AG04450 (cell line): ENCODE measurements at regions of chr4 and their contacts with region 1.

Region 1: GRCh38 chr4:153142700-153143438 is 61.4 kb upstream of the TRIM2 start:
- DNase-seq: no peak
- H3K4me3 ChIP-seq: no peak overlapping the region
- H3K27ac ChIP-seq: no peak overlapping the region
- H3K27me3 ChIP-seq: peaks cover 2% of the 10 kb centered on the region
- CTCF ChIP-seq: peak; percentile 97

Region 2: DNA sequence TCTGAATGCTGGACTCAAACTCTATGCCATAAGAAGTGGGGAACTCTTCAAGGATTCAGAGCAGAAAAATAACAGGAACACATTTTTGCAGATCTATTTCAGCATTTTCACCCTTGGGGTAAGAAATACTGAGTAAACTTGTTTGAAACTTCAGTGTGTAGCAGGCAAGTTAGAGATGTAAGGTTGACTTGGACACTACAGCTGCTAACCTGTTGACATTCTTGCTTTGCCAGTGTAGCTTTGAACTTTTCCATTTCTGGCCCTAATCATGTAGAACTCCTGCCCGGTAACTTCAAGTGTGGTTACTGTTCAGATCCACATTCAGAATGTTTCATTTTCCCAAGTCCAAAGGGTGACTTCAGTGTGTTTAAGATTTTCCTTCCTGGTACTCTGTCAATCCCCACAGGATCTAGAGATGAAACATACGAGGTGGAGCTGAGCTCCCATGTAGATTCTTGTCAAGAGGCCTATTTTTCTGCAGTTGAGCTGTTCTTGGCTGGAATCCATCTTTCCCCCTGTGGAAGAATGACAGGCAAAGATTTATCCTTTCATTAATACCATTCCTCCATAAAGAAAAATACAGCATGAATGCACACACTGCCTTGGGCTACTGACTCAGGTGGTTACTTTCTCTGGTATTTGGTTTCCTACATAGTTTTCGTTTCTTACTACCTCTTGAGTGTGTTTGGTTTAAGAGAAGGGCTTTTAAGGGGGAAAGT is 172.6 kb before region 1 on chr4:
- CTCF ChIA-PET with region 1: no interaction called
- POLR2A ChIA-PET with region 1: no interaction called
- DNase-seq: no peak
- H3K4me3 ChIP-seq: no peak overlapping the region
- H3K27ac ChIP-seq: no peak overlapping the region
- H3K27me3 ChIP-seq: no peaks in the 10 kb centered on the region
- CTCF ChIP-seq: no peak

Region 3: DNA sequence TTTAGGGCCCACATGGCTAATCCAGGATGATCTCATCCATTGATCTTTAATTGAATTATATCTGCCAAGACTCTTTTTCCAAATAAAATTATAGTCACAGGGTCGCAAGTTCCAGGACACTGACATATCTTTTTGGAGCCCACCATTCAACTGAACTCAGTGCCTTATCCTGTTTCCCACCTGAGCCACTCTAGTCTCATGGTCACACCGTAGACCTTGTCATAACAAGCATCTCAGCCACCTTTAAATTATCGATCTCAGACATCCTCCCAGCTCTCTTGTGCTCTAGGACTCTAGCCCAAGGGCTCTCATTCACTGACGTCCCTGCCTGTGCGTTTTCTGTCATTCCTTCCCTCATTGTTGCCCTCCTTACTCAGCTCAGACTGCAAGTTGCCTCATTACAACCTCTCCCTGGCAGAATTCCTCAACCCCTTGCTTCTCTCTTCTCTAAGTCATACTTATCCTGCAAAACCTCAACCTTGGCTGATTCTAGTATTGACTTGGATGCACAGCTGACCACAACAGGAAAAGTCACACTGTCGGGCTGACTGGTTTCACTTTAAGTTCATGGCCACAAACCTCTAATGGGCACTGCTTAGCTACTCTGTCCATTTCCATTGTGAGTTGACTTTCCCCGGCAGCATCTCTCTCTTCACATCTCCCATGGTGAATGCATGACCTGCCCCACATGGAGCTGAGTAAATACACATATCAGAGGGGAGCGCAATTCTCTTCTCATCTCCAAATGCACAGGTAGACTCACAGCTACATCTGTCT is 29.6 kb before region 1 on chr4:
- CTCF ChIA-PET with region 1: no interaction called
- POLR2A ChIA-PET with region 1: no interaction called
- DNase-seq: no peak
- H3K4me3 ChIP-seq: no peak overlapping the region
- H3K27ac ChIP-seq: no peak overlapping the region
- H3K27me3 ChIP-seq: peaks cover 18% of the 10 kb centered on the region
- CTCF ChIP-seq: no peak

Region 4: DNA sequence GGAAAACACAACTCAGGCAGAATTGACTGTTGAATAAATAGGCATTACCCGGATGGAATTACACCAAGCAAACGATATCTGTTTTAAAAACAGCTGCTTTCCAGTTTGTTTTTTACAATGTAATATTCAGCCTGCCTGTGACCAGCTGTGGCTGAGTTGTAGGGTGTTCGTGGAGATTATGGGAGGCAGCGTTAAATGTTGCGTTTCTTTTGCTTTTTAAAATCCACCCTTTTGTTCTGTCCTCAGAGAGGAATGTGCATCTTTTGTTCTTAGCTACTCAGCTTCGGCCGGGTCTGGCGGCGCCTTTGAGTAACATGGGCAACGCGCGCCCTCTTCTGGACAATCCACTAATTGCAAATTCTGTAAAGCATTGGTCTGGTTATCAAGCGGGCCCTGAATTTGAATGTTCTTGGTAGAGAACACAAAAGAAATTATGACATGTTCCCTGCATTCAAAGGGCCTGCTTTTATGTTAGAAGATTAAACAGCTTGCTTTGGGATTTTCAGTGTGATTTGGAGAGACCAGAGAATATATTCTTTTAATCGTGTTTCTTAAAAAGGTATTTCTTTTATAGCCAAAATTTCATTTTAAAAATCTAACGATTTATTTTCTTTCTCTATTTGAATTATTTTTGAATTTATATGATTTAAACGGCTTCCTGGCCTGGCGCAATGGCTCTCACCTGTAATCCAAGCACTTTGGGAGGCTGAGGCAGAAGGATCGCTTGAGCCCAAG is 14.9 kb before region 1 on chr4:
- CTCF ChIA-PET with region 1: interaction called, 16 read pairs
- POLR2A ChIA-PET with region 1: no interaction called
- DNase-seq: peak; percentile 65
- H3K4me3 ChIP-seq: no peak overlapping the region
- H3K27ac ChIP-seq: no peak overlapping the region
- H3K27me3 ChIP-seq: no peaks in the 10 kb centered on the region
- CTCF ChIP-seq: peak; percentile 84

Region 5: GRCh38 chr4:153296040-153296823 is 153.4 kb after region 1 on chr4:
- CTCF ChIA-PET with region 1: interaction called, 11 read pairs
- POLR2A ChIA-PET with region 1: no interaction called
- DNase-seq: peak; percentile 76
- H3K4me3 ChIP-seq: 0 out of 2 replicates have a peak overlapping the region, but pooled peaks have one; percentile 11
- H3K27ac ChIP-seq: peak overlapping the region; percentile 58
- H3K27me3 ChIP-seq: no peaks in the 10 kb centered on the region
- CTCF ChIP-seq: no peak

Region 6: DNA sequence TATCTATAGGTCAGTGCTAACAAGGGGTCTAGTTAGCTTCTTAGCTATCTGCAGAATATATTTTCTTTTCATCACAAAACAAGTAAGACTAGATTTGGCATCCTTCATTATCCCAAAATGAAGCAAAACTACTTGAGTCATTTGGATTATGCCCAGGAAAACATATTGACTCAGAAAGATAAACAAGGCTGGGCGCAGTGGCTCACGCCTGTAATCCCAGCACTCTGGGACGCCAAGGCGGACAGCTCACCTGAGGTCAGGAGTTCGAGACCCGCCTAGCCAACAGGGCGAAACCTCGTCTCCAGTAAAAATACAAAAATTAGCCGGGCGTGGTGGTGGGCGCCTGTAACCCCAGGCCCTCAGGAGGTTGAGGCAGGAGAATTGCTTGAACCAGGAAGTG is 183.6 kb after region 1 on chr4:
- CTCF ChIA-PET with region 1: interaction called, 32 read pairs
- POLR2A ChIA-PET with region 1: no interaction called
- DNase-seq: no peak
- H3K4me3 ChIP-seq: no peak overlapping the region
- H3K27ac ChIP-seq: no peak overlapping the region
- H3K27me3 ChIP-seq: no peaks in the 10 kb centered on the region
- CTCF ChIP-seq: no peak

Region 7: DNA sequence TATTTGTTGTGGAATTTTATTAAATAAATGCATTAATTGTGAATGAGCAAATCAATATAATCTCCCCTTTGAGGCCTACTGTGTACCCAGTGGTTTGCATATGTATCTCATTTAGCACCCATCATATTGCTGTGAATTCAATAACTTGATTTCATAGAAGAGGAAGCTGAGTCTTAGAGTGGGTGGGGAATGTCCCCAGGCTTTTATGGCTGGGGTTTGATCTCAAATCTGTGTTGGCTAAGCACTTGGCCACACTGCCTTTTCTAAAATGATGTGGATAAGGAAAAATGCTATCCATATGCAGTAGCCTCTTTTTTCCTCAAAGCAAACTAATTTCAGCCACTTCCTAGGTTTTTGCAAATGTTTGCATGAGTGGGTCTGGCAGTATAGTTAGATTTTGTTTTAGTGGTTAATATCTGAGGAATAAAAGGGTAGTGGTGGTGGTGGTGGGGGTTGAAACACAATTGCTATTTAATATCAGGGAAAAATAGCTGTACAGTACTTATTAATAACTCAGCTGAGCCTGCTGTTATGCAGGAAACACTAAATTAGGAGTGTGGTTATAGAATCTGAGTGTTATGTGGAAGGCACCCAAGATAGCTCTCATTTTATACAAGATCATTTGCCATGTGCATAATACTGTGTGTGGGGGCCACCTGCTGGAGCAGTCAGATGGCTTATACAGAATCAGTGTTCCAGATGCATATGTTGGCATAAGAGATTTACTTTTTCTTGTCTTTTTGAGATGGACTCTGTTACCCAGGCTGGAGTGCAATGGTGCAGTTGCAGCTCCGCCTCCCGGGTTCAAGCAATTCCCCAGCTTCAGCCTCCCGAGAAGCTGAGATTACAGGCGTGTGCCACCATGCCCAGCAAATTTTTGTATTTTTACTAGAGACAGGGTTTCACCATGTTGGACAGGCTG is 431.3 kb after region 1 on chr4:
- CTCF ChIA-PET with region 1: interaction called, 17 read pairs
- POLR2A ChIA-PET with region 1: no interaction called
- DNase-seq: peak; percentile 64
- H3K4me3 ChIP-seq: no peak overlapping the region
- H3K27ac ChIP-seq: no peak overlapping the region
- H3K27me3 ChIP-seq: no peaks in the 10 kb centered on the region
- CTCF ChIP-seq: peak; percentile 74

Region 8: GRCh38 chr4:153750197-153750817 is 607.4 kb after region 1 on chr4:
- CTCF ChIA-PET with region 1: interaction called, 13 read pairs
- POLR2A ChIA-PET with region 1: no interaction called
- DNase-seq: peak; percentile 24
- H3K4me3 ChIP-seq: no peak overlapping the region
- H3K27ac ChIP-seq: no peak overlapping the region
- H3K27me3 ChIP-seq: no peaks in the 10 kb centered on the region
- CTCF ChIP-seq: peak; percentile 76